ENCODE measurements at regions of chr10 and their contacts with region 1.

Region 1: DNA sequence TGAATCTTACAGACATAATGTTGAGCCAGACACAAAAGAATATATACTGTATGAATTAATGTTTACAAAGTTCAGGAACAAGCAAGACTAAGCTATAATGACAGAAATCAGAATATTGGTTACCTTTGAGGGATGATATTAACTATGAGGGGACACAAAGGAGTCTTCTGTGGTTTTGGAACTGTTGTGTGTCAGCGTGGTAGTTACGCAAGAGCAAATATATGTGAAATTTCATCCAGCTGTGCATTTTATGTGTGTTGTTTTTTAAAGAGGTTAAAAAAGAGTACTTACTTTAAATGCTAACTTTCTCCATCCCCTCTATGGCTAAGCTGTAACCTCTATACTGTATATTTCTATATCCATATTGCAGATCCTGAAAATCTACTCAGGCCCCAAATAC is 14.9 kb downstream of the SLC25A28 start:
- DNase-seq: no peak
- H3K4me3 ChIP-seq: no peak overlapping the region
- H3K27ac ChIP-seq: no peak overlapping the region
- H3K4me1 ChIP-seq: no peaks in the 10 kb centered on the region
- H3K27me3 ChIP-seq: no peaks in the 10 kb centered on the region
- CTCF ChIP-seq: no peak

Region 2: DNA sequence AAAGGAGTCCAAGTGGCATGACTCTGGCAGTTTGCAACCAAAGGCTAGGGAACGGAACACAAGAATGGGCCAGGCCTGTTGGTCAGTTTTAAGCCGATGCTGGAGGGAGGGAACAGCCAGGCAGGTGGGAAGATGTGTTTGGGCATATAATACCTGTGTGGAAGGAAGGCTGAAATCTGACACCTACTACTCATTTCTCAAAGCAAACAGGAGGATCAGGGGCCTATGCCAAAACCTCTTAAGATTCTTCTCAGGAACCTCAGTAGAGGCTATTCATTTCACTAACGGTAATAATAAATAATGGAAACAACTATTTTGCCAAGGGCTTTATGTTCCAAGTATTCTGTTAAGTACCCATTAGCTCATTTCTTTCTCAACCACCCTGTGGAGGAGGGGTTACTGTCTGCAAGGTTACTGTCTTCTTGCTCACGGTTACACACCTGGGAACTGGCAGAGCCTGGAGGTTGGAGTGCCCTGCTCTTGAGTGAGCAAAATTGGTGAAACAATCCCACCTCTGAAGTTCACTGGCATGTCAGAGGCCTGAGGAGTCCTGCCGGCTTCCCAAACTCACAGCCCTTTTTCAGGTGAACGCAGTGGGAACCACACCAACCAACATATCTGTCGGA is 210.5 kb before region 1 on chr10:
- intact Hi-C with region 1: loop called (anchors 5 kb)
- DNase-seq: no peak
- H3K4me3 ChIP-seq: no peak overlapping the region
- H3K27ac ChIP-seq: no peak overlapping the region
- H3K4me1 ChIP-seq: peaks cover 0 to 3% (median 0%) of the 10 kb centered on the region in 3 donors
- H3K27me3 ChIP-seq: no peaks in the 10 kb centered on the region
- CTCF ChIP-seq: no peak

Measured in kidney (tissue), 22 donors.